HepG2 (cell line): ENCODE measurements at regions of chr6 and their contacts with region 1.

Region 1: GRCh38 chr6:17156112-17156921 is 54.5 kb downstream of the STMND1 start:
- DNase-seq: peak; percentile 75
- ATAC-seq: peak; percentile 70
- H3K4me3 ChIP-seq: no peak overlapping the region
- H3K27ac ChIP-seq: no peak overlapping the region
- H3K4me1 ChIP-seq: peaks cover 23% of the 10 kb centered on the region
- H3K27me3 ChIP-seq: no peaks in the 10 kb centered on the region; a peak in 1 of 5 replicates
- CTCF ChIP-seq: peak; percentile 85
- EP300 ChIP-seq: no peak
- POLR2A ChIP-seq: no peak
- RAD21 ChIP-seq: peak; percentile 82

Region 2: DNA sequence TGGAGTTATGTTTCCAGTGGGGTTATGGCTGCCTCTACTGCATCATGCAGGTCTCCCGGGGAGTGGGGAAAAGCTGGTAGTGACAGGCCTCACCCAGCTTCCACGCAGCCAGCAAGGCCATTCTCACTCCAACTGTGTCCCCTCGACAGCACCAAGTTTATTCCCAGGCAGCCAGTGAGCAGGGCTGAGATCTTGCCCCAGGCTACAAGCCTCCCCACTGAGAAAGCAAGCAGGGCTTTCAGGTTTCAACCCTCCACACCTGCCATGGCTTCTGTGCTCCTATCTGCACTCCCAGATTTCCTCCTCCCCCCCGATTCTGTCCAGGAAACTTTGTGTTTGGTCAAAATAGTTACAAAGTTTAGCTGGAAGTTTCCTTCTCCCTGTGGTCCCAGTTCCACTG is 11.2 kb before region 1 on chr6:
- CTCF ChIA-PET with region 1: no interaction called
- POLR2A ChIA-PET with region 1: no interaction called
- in situ Hi-C with region 1: no loop called
- intact Hi-C with region 1: no loop called
- DNase-seq: no peak
- ATAC-seq: no peak
- H3K4me3 ChIP-seq: no peak overlapping the region
- H3K27ac ChIP-seq: no peak overlapping the region
- H3K4me1 ChIP-seq: no peaks in the 10 kb centered on the region
- H3K27me3 ChIP-seq: no peaks in the 10 kb centered on the region; a peak in 1 of 5 replicates
- CTCF ChIP-seq: no peak
- EP300 ChIP-seq: no peak
- POLR2A ChIP-seq: no peak
- RAD21 ChIP-seq: no peak

Region 3: DNA sequence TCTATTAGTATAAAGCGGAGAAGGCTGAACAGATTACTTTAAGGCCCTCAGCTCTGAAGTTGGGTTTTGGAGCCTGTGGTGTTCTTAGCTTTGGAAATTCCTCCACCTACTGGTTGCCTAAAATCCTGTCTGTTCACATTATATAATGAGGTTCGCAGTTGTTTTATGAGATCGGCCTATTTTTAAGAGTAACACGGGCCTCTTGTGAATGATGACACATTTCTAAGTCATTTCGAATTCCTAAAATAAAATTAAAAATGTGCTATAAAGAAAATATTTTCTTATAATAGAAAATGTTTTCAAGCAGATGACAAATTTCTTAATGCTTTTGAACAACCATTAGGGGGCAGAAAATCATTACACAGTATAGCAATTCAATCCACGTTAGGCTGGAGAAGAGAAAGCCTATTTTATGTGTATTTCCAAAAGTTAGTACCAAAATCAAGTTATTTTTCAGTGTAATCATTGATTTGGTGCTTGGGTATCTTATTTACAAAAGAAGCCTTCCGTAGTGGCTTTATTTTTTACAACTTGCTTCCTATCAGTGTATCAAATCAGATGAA is 428.0 kb after region 1 on chr6:
- CTCF ChIA-PET with region 1: interaction called, 55 read pairs
- POLR2A ChIA-PET with region 1: no interaction called
- in situ Hi-C with region 1: loop called (anchors 5 kb)
- intact Hi-C with region 1: loop called (anchors 1 kb)
- DNase-seq: peak; percentile 67
- ATAC-seq: peak; percentile 78
- H3K4me3 ChIP-seq: peak overlapping the region in 2 of 3 experiments; percentile 34 to 52; a peak in 4 of 6 replicates
- H3K27ac ChIP-seq: no peak overlapping the region
- H3K4me1 ChIP-seq: peaks cover 35% of the 10 kb centered on the region
- H3K27me3 ChIP-seq: no peaks in the 10 kb centered on the region
- CTCF ChIP-seq: peak; percentile 84
- EP300 ChIP-seq: 0 out of 4 replicates have a peak, but pooled peaks of 1 of the 2 experiments have one; percentile 19
- POLR2A ChIP-seq: no peak
- RAD21 ChIP-seq: peak; percentile 78

Region 4: DNA sequence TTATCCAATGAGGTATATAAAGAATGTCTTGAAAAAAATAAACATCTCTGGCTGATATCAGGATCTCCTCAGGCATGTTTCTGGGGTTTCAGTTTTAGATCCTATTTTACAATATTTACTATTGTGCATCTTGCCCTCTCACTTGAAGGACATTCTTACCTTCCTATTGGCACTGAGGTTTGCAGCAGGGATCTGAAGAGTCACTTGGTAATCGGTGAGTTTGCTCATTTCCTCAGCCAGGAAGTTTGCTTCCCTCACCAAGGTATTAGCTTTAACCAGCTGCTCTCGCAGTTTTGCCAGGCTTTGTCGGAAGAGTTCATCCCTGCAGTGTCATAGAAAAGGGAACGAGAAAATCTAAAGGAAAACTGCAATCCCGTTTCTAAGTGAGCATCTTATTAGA is 652.3 kb after region 1 on chr6:
- CTCF ChIA-PET with region 1: interaction called, 13 read pairs
- POLR2A ChIA-PET with region 1: no interaction called
- in situ Hi-C with region 1: loop called (anchors 5 kb)
- intact Hi-C with region 1: loop called (anchors 1 kb)
- DNase-seq: no peak
- ATAC-seq: no peak
- H3K4me3 ChIP-seq: no peak overlapping the region
- H3K27ac ChIP-seq: no peak overlapping the region
- H3K4me1 ChIP-seq: peaks cover 16% of the 10 kb centered on the region
- H3K27me3 ChIP-seq: no peaks in the 10 kb centered on the region
- CTCF ChIP-seq: no peak
- EP300 ChIP-seq: no peak
- POLR2A ChIP-seq: no peak
- RAD21 ChIP-seq: no peak

Region 5: DNA sequence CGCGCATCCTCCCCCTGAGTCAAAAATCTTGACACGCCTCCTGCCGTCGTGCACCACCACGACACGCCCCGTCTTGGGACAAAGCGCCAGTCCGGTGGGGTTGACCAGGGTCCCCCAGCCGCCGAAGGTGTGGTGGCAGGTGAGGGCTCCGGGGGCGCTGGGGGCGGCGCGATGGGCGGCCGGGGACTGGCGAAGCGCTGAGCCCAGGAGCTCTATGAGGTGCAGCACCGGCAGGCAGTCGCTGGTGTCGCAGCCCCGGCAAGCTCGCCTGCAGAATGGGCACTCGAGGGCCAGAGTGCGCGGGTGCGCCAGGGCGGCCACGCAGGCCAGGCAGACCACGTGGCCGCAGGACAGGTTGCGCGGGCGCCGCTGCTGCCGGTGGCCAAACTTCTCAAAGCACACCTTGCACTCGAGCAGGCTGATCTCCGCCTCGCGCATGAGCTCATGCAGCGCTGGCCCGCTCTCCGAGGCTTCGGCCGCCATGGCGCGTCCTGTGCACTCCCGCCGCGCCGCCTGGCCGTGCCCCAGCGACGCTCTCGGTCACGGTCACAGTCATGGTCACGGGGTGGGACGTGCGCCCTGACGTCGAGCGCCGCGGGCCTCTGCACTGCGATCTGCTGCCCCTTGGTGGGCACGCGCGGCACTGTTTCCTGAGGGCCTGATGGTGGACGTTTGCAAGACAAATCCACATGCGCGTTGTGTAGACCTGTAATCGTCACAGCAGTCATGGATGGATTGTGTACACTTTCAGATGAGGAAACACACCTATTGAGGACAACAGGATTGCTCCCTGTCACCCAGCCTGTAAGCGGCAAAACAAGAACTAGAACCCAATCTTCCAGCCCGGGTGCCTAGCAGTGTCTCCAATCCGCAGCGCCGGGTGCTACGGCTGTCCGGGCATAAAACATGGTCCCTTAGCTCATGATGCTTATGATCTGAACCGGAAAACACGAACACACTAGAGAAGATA is 966.1 kb after region 1 on chr6 and contains the start of gene NHLRC1:
- CTCF ChIA-PET with region 1: interaction called, 3 read pairs
- POLR2A ChIA-PET with region 1: no interaction called
- in situ Hi-C with region 1: loop called (anchors 10 kb)
- intact Hi-C with region 1: loop called (anchors 5 kb)
- DNase-seq: peak; percentile 84
- ATAC-seq: peak; percentile 96
- H3K4me3 ChIP-seq: peak within 1 kb of the TSS; percentile 52 to 67 (median 52)
- H3K27ac ChIP-seq: no peak within 1 kb of the TSS
- H3K4me1 ChIP-seq: peaks cover 24% of the 10 kb centered on the region
- H3K27me3 ChIP-seq: no peaks in the 10 kb centered on the region; a peak in 1 of 5 replicates
- CTCF ChIP-seq: peak; percentile 100
- EP300 ChIP-seq: peak; percentile 36 to 56; a peak in 2 of 4 replicates
- POLR2A ChIP-seq: no peak; a peak in 1 of 4 replicates
- RAD21 ChIP-seq: peak; percentile 99
- total RNA-seq, gene NHLRC1: 0.11 and 0.20 TPM in 2 replicates

Region 6: GRCh38 chr6:18503593-18504231 is 1347.4 kb after region 1 on chr6:
- CTCF ChIA-PET with region 1: interaction called, 4 read pairs
- POLR2A ChIA-PET with region 1: no interaction called
- in situ Hi-C with region 1: no loop called
- intact Hi-C with region 1: loop called (anchors 10 kb)
- DNase-seq: peak; percentile 80
- ATAC-seq: peak; percentile 91
- H3K4me3 ChIP-seq: peak overlapping the region; percentile 46 to 63 (median 61)
- H3K27ac ChIP-seq: no peak overlapping the region
- H3K4me1 ChIP-seq: peaks cover 15% of the 10 kb centered on the region
- H3K27me3 ChIP-seq: peaks cover 0 to 5% of the 10 kb centered on the region in 2 experiments; a peak in 1 of 5 replicates
- CTCF ChIP-seq: peak; percentile 97
- EP300 ChIP-seq: no peak
- POLR2A ChIP-seq: no peak
- RAD21 ChIP-seq: peak; percentile 98